GM10248 (cell line): ENCODE measurements at regions of chr11 and their contacts with region 1.

Region 1: GRCh38 chr11:19076744-19077589 is 16.4 kb upstream of the MRGPRX2 start:
- DNase-seq: peak; percentile 67
- CTCF ChIP-seq: peak; percentile 97

Region 2: GRCh38 chr11:19060629-19061028 is 16.3 kb before region 1 on chr11 and contains the start of gene MRGPRX2:
- CTCF ChIA-PET with region 1: interaction called, 90 read pairs
- POLR2A ChIA-PET with region 1: no interaction called
- DNase-seq: no peak
- CTCF ChIP-seq: no peak

Region 3: DNA sequence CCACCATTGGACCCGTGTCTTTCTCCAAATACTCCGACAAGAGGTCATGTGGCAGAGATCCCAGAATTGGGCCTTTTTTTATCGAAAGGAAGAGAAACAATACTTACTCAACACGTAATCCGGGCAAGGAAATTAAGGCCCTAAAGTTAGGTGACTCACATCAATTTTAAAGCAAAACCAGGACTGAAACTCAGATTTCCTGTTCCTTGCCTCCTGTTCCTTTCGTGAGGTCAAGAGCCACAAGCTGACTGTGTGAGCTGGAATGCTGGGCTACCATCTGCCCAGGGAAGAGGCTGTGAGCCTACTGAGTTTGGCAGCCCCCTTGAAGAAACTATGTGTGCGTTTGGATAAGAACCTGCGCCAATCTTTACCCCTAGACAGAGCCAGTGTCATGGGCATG is 10.7 kb after region 1 on chr11:
- CTCF ChIA-PET with region 1: interaction called, 90 read pairs
- POLR2A ChIA-PET with region 1: no interaction called
- DNase-seq: no peak
- CTCF ChIP-seq: no peak

Region 4: DNA sequence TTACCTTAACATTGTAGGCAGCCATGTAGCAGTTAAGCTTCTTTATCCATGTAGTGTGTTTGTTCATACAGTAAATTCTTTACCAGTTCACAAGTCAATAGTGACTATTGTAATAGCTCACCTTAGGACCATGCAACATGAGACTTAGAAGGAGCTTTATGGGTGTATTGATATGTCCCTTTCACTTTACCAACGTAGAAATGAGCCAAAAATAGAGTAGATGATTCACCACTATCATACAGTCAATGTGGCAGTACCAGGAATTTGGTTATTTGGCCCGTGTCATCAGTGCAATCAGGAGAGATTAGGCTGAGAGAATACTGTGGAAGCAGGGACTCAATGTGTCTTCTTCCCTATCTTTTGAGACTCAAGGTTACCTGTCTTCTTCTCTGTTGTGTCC is 44.7 kb after region 1 on chr11:
- CTCF ChIA-PET with region 1: interaction called, 13 read pairs
- POLR2A ChIA-PET with region 1: no interaction called
- DNase-seq: no peak
- CTCF ChIP-seq: no peak